Activated CD4-positive, alpha-beta memory T cell treated with anti-CD3 and anti-CD28 coated beads for 36 hours (primary cell): ENCODE measurements at regions of chr1 and their contacts with region 1.

Region 1: GRCh38 chr1:10209905-10210810 is at the start of gene KIF1B:
- DNase-seq: peak; percentile 97
- H3K4me3 Mint-ChIP-seq: peak within 1 kb of the TSS; percentile 82
- H3K27ac Mint-ChIP-seq: peak within 1 kb of the TSS; percentile 60
- H3K4me1 Mint-ChIP-seq: peaks cover 33% of the 10 kb centered on the region
- H3K27me3 Mint-ChIP-seq: no peaks in the 10 kb centered on the region
- total RNA-seq, gene KIF1B: 16.8 to 17.4 TPM

Region 2: DNA sequence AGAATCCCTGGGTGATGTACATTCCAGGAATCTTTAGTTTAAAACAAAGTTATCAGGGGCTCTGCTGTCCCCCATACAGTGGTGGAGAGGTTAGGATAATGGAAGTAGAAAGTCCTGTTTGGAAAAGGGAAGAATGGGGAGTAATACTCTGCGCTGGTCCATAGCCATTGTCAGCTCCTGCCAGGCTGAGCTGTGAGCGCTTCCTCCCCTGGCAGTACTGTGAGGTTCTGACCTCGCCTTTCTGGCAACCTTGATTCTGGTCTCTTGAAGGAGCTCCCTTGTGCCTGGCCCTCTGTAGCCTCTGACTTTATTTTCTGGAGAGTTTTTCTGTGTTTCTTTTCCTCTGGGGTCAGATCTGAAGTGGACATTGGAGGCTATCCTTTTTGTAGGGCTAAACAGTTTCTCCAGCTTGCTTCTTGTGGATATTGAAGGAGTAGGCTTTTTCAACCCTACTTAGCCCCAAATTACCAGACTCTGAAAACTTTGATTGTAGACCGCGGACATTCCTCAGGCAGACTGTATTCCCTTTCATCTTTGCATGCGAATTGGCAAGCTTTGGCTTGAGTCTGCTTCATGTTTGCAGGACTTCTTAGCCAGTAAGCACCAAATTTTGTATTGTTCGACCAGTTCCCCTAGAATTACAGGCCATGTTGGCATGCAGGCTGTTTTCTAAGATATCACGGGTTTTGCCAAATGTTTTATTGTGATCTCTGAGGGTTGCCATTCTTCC is 163.6 kb before region 1 on chr1:
- CTCF ChIA-PET with region 1: no interaction called
- POLR2A ChIA-PET with region 1: no interaction called
- intact Hi-C with region 1: no loop called
- DNase-seq: no peak
- H3K4me3 Mint-ChIP-seq: no peak overlapping the region
- H3K27ac Mint-ChIP-seq: no peak overlapping the region
- H3K4me1 Mint-ChIP-seq: peaks cover 29% of the 10 kb centered on the region
- H3K27me3 Mint-ChIP-seq: no peaks in the 10 kb centered on the region

Region 3: DNA sequence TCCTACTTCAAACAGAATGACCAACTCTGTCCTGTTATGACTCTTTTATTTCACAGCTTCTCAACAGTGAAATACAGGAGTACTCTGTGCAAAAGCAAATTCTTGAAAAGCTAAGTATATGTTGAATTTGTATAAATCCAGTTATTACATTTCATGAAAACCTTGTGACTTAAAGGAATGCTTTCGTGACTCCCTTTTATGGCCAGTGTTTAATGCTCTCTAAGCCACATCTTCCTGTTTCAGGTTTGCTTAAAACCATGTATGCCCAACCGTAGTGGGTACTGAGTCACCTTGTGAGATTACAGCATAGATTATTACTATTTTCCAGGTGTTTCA is 40.0 kb before region 1 on chr1:
- CTCF ChIA-PET with region 1: interaction called, 12 read pairs
- POLR2A ChIA-PET with region 1: interaction called, 9 read pairs
- intact Hi-C with region 1: loop called (anchors 1 kb)
- DNase-seq: peak; percentile 35
- H3K4me3 Mint-ChIP-seq: no peak overlapping the region
- H3K27ac Mint-ChIP-seq: peak overlapping the region; percentile 83
- H3K4me1 Mint-ChIP-seq: peaks cover 40% of the 10 kb centered on the region
- H3K27me3 Mint-ChIP-seq: no peaks in the 10 kb centered on the region

Region 4: DNA sequence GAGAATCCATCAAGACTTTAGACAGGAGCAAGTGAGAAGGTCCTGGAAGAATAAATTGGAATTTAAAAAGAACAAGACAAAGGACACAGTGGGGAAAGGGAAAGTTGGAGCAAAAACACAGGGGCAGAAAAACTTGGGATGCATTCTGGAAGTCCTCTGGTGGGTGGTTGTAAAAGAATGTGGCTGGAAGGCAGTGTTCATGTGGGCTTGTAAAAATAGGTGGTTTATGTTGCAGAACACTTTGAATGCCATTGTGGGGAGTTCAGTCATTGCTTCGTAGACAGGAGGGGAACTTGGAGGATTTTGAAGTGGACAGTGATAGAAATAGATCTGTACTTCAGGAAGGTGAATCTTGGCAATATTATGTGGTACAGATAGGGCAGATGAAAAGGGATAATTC is 15.4 kb after region 1 on chr1:
- CTCF ChIA-PET with region 1: interaction called, 22 read pairs
- POLR2A ChIA-PET with region 1: interaction called, 3 read pairs
- intact Hi-C with region 1: no loop called
- DNase-seq: no peak
- H3K4me3 Mint-ChIP-seq: no peak overlapping the region
- H3K27ac Mint-ChIP-seq: no peak overlapping the region
- H3K4me1 Mint-ChIP-seq: peaks cover 16% of the 10 kb centered on the region
- H3K27me3 Mint-ChIP-seq: no peaks in the 10 kb centered on the region

Region 5: GRCh38 chr1:10252508-10252907 is 42.4 kb after region 1 on chr1:
- CTCF ChIA-PET with region 1: interaction called, 11 read pairs
- POLR2A ChIA-PET with region 1: no interaction called
- intact Hi-C with region 1: loop called (anchors 2 kb)
- DNase-seq: no peak
- H3K4me3 Mint-ChIP-seq: no peak overlapping the region
- H3K27ac Mint-ChIP-seq: no peak overlapping the region
- H3K4me1 Mint-ChIP-seq: peaks cover 21% of the 10 kb centered on the region
- H3K27me3 Mint-ChIP-seq: no peaks in the 10 kb centered on the region

Region 6: GRCh38 chr1:10338047-10338446 is 127.9 kb after region 1 on chr1:
- CTCF ChIA-PET with region 1: interaction called, 28 read pairs
- POLR2A ChIA-PET with region 1: no interaction called
- intact Hi-C with region 1: loop called (anchors 1 kb)
- DNase-seq: peak; percentile 65
- H3K4me3 Mint-ChIP-seq: no peak overlapping the region
- H3K27ac Mint-ChIP-seq: no peak overlapping the region
- H3K4me1 Mint-ChIP-seq: no peaks in the 10 kb centered on the region
- H3K27me3 Mint-ChIP-seq: no peaks in the 10 kb centered on the region

Region 7: DNA sequence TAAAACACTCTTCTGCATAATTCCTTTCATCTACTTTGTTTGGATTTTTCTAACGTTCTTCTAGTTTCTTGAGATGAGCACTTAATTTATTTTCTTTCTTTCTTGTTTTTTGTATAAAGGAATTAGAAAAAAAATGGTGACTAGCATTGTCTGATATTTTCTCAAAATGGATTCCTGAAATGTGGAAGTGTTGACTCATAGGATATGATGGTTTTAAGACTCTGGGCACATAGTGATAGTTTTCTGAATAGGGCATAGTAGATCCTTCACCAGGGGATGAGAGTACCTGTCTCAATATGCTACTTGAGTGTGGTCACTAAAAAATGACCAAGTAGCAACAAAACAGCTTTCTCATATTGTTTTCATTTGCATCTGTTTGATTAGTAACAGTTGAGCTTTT is 365.5 kb after region 1 on chr1:
- CTCF ChIA-PET with region 1: no interaction called
- POLR2A ChIA-PET with region 1: no interaction called
- intact Hi-C with region 1: no loop called
- DNase-seq: no peak
- H3K4me3 Mint-ChIP-seq: no peak overlapping the region
- H3K27ac Mint-ChIP-seq: no peak overlapping the region
- H3K4me1 Mint-ChIP-seq: no peaks in the 10 kb centered on the region
- H3K27me3 Mint-ChIP-seq: no peaks in the 10 kb centered on the region